Activated CD4-positive, alpha-beta T cell treated with anti-CD3 and anti-CD28 coated beads for 36 hours (primary cell): ENCODE measurements at regions of chr12 and their contacts with region 1.

Region 1: GRCh38 chr12:24838531-24838950 is 110.4 kb downstream of the BCAT1 start:
- DNase-seq: peak; percentile 53
- ATAC-seq: peak; percentile 6
- H3K4me3 Mint-ChIP-seq: peak overlapping the region; percentile 36
- H3K27ac Mint-ChIP-seq: peak overlapping the region; percentile 87
- H3K4me1 Mint-ChIP-seq: peaks cover 51% of the 10 kb centered on the region
- H3K27me3 Mint-ChIP-seq: peaks cover 10% of the 10 kb centered on the region

Region 2: DNA sequence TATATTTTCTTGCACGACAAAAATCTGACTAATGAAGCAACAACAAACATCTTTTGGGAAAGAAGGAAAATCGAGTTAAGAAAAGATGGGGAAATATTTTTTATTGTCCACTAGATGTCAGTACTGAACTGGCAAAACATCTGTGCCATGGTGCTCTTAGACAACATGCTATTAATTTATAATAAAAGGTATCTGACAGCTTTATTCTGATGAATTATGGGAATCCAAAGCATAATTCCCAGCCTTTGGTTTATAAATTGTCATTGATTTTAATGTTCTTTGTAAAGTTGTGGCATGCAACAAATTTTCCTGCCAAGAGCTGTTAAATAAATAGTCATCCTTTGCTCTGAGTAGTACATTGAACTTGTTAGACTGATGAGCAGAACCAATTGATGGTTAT is 1982.4 kb before region 1 on chr12:
- CTCF ChIA-PET with region 1: no interaction called
- POLR2A ChIA-PET with region 1: no interaction called
- intact Hi-C with region 1: loop called in 1 of 2 experiments (anchors 10 kb)
- DNase-seq: no peak
- ATAC-seq: no peak
- H3K4me3 Mint-ChIP-seq: no peak overlapping the region
- H3K27ac Mint-ChIP-seq: no peak overlapping the region
- H3K4me1 Mint-ChIP-seq: no peaks in the 10 kb centered on the region
- H3K27me3 Mint-ChIP-seq: peaks cover 6% of the 10 kb centered on the region

Region 3: GRCh38 chr12:24600996-24601395 is 237.5 kb before region 1 on chr12:
- CTCF ChIA-PET with region 1: interaction called, 3 read pairs
- POLR2A ChIA-PET with region 1: no interaction called
- intact Hi-C with region 1: loop called (anchors 1 kb)
- DNase-seq: peak; percentile 18
- ATAC-seq: peak; percentile 78
- H3K4me3 Mint-ChIP-seq: no peak overlapping the region
- H3K27ac Mint-ChIP-seq: no peak overlapping the region
- H3K4me1 Mint-ChIP-seq: peaks cover 13% of the 10 kb centered on the region
- H3K27me3 Mint-ChIP-seq: peaks cover 4% of the 10 kb centered on the region

Region 4: GRCh38 chr12:24754690-24755638 is 83.6 kb before region 1 on chr12:
- CTCF ChIA-PET with region 1: no interaction called
- POLR2A ChIA-PET with region 1: interaction called, 6 read pairs
- intact Hi-C with region 1: loop called (anchors 1 kb)
- DNase-seq: peak; percentile 47
- ATAC-seq: peak; percentile 92
- H3K4me3 Mint-ChIP-seq: no peak overlapping the region
- H3K27ac Mint-ChIP-seq: peak overlapping the region; percentile 84
- H3K4me1 Mint-ChIP-seq: peaks cover 31% of the 10 kb centered on the region
- H3K27me3 Mint-ChIP-seq: peaks cover 16% of the 10 kb centered on the region

Region 5: DNA sequence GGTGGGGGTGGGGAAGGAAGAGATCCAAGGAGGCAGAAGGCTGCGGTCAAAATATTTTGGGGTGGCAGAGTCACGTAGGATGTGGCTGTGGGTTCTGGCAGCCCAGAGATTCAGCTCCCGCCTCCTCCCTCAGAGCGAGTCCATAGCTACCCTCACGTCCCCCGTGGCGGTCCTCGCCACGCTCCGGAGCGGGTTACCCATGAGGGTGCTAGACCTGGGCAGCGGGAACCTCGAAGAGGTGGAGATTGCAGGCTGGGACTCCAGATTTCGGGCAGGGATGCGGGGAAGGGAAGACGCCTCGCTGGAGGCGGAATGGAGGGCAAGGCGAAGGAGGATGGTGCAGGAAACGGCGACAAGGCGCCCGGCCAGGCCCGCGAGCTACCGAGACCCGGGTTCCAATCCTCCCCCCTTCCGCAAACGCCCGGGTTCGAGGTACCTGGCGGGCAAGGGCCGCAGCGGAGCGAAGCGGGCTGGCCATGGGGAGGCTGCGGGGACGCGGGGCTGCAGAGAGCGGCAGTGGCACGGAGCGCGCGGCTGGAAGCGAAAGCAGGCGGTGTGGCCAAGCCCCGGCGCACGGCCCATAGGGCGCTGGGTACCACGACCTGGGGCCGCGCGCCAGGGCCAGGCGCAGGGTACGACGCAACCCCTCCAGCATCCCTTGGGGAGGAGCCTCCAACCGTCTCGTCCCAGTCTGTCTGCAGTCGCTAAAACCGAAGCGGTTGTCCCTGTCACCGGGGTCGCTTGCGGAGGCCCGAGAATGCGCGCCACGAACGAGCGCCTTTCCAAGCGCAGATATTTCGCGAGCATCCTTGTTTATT is 64.2 kb after region 1 on chr12:
- CTCF ChIA-PET with region 1: interaction called, 8 read pairs
- POLR2A ChIA-PET with region 1: interaction called, 7 read pairs
- intact Hi-C with region 1: loop called (anchors 1 kb)
- DNase-seq: peak; percentile 63
- ATAC-seq: peak; percentile 28
- H3K4me3 Mint-ChIP-seq: peak overlapping the region; percentile 88
- H3K27ac Mint-ChIP-seq: peak overlapping the region; percentile 95
- H3K4me1 Mint-ChIP-seq: peaks cover 50% of the 10 kb centered on the region
- H3K27me3 Mint-ChIP-seq: peaks cover 28% of the 10 kb centered on the region

Region 6: GRCh38 chr12:25052196-25052913 is 213.8 kb after region 1 on chr12:
- CTCF ChIA-PET with region 1: interaction called, 4 read pairs
- POLR2A ChIA-PET with region 1: interaction called, 4 read pairs
- intact Hi-C with region 1: loop called (anchors 1 kb)
- DNase-seq: peak; percentile 56
- ATAC-seq: peak; percentile 69
- H3K4me3 Mint-ChIP-seq: peak overlapping the region; percentile 97
- H3K27ac Mint-ChIP-seq: peak overlapping the region; percentile 98
- H3K4me1 Mint-ChIP-seq: peaks cover 42% of the 10 kb centered on the region
- H3K27me3 Mint-ChIP-seq: no peaks in the 10 kb centered on the region